Vagina (tissue), 2 donors: ENCODE measurements at regions of chr14 and their contacts with region 1.

Region 1: DNA sequence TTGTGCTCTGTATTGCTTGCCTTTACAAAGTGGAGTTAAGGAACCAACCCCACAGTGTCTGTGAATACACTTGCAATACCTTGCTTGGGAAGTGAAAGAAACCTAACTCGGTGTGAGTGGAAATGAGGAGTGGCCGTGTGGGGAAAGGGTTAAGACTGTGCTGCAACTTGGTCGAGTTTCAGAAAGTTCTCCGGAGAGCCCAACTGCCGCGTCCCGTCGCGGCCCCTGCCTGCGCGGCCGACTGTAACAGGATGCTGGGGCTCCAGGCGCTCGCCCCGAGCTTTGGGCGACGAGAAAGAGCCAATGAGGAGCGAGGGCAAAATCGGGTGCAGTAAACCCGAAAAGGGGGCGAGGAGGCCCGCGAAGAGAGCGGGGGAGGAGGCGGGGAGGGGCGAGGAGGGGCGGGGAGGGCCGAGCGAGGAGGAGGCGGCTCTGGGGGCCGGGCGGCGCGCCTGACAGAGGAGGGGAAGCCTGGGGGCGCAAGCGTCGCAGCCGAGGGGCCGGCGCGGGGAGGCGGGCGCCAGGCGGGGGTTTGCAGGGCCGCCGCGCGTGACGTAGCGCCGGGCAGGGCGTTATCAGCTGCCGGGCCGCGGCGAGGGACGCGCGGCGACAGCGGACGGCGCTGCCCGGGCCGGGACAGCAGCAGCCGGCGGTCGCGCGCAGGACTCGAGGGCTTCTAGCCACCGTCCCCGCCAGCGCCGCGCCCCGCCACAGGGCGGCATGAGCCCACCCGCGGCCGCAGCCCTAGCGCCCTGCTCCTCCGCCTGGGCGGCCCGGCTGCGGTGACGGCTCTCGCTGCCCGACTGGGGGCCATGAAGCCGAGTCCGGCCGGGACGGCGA is at the start of gene DACT1:
- DNase-seq: no peak
- H3K4me3 ChIP-seq: peak within 1 kb of the TSS; percentile 59 to 81
- H3K27ac ChIP-seq: peak within 1 kb of the TSS; percentile 94
- H3K4me1 ChIP-seq: peaks cover 21% of the 10 kb centered on the region
- H3K27me3 ChIP-seq: no peaks in the 10 kb centered on the region
- CTCF ChIP-seq: no peak
- POLR2A ChIP-seq: peak in 1 of 2 donors; percentile 37
- total RNA-seq, gene DACT1: 9.8 TPM

Region 2: GRCh38 chr14:58533446-58533845 is 104.2 kb before region 1 on chr14:
- intact Hi-C with region 1: no loop called
- DNase-seq: no peak
- H3K4me3 ChIP-seq: no peak overlapping the region
- H3K27ac ChIP-seq: no peak overlapping the region
- H3K4me1 ChIP-seq: peaks cover 6% of the 10 kb centered on the region
- H3K27me3 ChIP-seq: no peaks in the 10 kb centered on the region
- CTCF ChIP-seq: no peak
- POLR2A ChIP-seq: no peak

Region 3: GRCh38 chr14:58598028-58598803 is 39.4 kb before region 1 on chr14:
- intact Hi-C with region 1: no loop called
- DNase-seq: no peak
- H3K4me3 ChIP-seq: no peak overlapping the region
- H3K27ac ChIP-seq: no peak overlapping the region
- H3K4me1 ChIP-seq: no peaks in the 10 kb centered on the region
- H3K27me3 ChIP-seq: no peaks in the 10 kb centered on the region
- CTCF ChIP-seq: no peak
- POLR2A ChIP-seq: no peak

Region 4: GRCh38 chr14:59028476-59029202 is 391.0 kb after region 1 on chr14:
- intact Hi-C with region 1: loop called (anchors 10 kb)
- DNase-seq: no peak
- H3K4me3 ChIP-seq: no peak overlapping the region
- H3K27ac ChIP-seq: no peak overlapping the region
- H3K4me1 ChIP-seq: no peaks in the 10 kb centered on the region
- H3K27me3 ChIP-seq: no peaks in the 10 kb centered on the region
- CTCF ChIP-seq: peak; percentile 28 to 56 (median 35)
- POLR2A ChIP-seq: no peak